ENCODE measurements at regions of chr6 and their contacts with region 1.

Region 1: DNA sequence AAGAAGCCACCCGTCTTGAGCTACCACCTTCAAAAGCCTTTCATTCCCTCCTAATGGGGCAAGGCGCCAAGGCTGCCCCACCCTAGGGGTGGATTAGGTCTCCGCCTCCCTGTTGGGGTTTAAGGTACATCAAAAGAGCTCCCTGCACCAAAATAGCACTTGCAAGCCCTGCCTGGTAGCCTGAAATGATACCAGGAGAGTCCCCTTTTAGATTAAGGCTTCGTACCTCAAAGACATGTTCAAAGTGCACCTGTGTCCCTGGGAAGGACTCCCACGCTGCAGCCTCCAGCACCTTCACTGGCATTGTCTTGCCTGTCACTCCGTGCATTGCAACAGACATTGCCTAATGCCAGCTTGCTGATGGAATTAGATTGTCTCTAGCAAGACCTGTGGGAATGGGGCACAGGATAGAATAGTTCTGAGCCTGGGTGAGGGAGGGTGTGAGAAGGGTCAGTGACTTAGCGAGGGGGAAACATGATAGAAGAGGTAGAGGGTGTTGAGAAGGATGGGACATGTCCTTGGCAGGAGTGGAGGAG is 15.6 kb upstream of the CDKN1A start:
- DNase-seq: peak in 4 of 10 donors; percentile 26 to 35 (median 30)
- ATAC-seq: peak; percentile 76
- H3K4me3 Mint-ChIP-seq: peak overlapping the region in 9 of 10 donors; percentile 13 to 71 (median 55)
- H3K27ac Mint-ChIP-seq: peak overlapping the region in 5 of 10 donors; percentile 61 to 80 (median 75)
- H3K4me1 Mint-ChIP-seq: peaks cover 0 to 37% (median 16%) of the 10 kb centered on the region in 4 donors
- H3K27me3 Mint-ChIP-seq: peaks cover 6 to 16% (median 12%) of the 10 kb centered on the region in 5 donors

Region 2: DNA sequence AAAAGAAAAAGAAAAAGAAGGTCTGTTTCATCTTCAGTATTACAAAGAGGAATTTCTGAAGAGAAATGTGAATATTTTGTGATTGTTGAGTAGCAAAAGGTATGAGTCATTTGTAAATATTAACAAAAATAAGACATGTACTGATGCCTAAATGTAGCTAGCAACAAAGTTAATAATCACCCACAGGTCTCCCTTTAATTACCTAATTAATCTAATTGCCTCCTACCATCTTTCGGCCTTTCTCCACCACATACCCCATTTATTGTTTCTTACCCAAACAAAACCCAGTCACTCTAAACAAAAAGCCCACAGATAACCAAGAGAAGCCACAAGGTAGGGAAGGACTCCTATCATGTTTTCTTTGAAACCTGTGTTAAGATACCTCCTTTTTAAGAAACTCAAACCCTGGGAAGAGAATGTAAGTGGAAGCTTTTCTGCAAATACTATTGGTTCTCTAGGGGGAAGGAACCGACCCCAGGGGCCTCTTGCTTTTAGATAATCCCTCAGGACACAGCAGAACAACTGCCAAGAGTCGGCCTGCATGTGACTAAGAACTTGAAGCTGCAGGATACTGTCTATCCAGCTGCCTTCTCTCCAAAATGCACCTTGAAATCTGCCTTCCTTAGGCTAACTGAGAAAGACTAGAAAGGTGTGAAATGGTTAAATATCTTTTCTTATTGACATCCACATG is 99.5 kb before region 1 on chr6:
- POLR2A ChIA-PET with region 1: interaction called, 11 read pairs
- DNase-seq: no peak
- ATAC-seq: no peak
- H3K4me3 Mint-ChIP-seq: no peak overlapping the region
- H3K27ac Mint-ChIP-seq: peak overlapping the region in 3 of 10 donors; percentile 2 to 53 (median 51)
- H3K4me1 Mint-ChIP-seq: peaks cover 0 to 7% (median 1%) of the 10 kb centered on the region in 4 donors
- H3K27me3 Mint-ChIP-seq: peaks cover 0 to 2% (median 0%) of the 10 kb centered on the region in 5 donors